Activated CD4-positive, alpha-beta T cell treated with anti-CD3 and anti-CD28 coated beads, Interleukin-2, amount 10 ng/mL, durations not matched to agents 24 days and 14 days (primary cell): ENCODE measurements at regions of chr11 and their contacts with region 1.

Region 1: DNA sequence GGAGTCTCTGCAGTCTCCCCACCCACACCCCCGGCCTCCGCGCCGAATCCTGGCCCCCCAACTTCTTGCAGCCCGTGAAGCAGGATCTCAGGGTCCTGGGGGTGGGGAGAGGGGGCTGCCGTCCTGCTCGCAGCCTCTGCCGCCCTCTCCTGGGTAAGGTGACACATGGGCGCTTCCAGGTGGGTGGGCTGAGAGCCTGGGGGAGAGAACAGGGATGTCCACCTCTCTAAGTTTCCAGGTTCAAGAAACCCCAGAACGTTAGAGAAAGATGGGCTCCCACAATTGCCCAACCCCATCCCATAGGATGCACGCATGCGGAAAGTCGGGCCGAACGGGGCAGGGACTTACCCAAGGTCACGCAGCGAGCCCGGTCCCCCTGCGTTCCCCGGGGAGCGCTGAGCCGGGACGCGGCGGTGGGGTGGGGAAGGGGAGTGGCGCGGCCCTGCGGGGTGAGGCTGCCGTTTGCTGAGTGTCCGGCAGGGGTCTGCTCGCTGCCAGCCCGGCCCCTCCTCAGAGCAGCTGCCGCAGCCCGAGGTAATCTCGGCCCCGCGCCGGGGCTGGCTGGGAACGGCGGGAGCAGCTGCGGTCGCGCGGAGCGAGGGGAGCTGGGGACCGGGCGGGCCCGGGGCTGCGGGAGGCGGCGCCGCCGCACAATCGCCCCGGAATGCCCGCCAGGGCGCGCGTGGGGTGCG is 705 bp upstream of the CAPN1 start:
- DNase-seq: peak; percentile 90
- H3K4me3 Mint-ChIP-seq: peak overlapping the region; percentile 84
- H3K27ac Mint-ChIP-seq: peak overlapping the region; percentile 72
- H3K4me1 Mint-ChIP-seq: peaks cover 10% of the 10 kb centered on the region
- H3K27me3 Mint-ChIP-seq: peaks cover 8% of the 10 kb centered on the region

Region 2: DNA sequence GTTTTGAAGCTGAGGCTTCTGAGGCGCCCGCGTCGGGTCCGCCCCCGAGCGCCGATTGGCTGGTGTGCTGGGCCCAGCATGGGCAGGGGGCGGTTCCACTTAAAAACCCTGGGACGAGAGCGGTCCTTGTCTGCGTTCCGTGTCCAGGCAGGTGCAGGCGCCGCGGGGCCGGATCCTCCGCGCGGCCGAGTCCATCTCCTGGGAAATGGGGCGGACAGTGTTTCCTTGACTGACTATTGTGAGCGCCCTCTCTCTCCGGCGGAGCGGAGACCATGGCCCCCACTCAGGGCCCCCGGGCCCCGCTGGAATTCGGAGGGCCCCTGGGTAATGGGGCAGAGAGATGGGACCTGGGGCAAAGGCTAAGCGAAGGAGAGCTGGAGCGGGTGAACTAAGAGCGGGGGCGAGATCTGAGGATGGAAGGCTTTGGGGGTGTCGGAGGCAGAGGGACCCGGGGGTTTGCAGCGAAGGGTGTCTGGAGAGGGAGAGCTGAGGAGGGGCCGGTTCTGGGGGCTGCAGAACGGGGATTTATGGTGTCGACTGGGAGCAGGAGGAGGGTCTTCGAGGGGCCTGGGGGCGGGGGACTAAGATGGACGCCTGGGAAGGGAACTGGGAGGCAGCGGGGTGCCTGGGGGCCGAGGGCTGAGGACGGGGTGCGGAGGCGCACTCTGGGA is 69.1 kb before region 1 on chr11 and contains the start of gene TM7SF2:
- intact Hi-C with region 1: loop called (anchors 2 kb)
- DNase-seq: peak; percentile 98
- H3K4me3 Mint-ChIP-seq: peak within 1 kb of the TSS; percentile 98
- H3K27ac Mint-ChIP-seq: peak within 1 kb of the TSS; percentile 93
- H3K4me1 Mint-ChIP-seq: peaks cover 25% of the 10 kb centered on the region
- H3K27me3 Mint-ChIP-seq: no peaks in the 10 kb centered on the region
- total RNA-seq, gene TM7SF2: 28.2 and 28.9 TPM in 2 replicates

Region 3: DNA sequence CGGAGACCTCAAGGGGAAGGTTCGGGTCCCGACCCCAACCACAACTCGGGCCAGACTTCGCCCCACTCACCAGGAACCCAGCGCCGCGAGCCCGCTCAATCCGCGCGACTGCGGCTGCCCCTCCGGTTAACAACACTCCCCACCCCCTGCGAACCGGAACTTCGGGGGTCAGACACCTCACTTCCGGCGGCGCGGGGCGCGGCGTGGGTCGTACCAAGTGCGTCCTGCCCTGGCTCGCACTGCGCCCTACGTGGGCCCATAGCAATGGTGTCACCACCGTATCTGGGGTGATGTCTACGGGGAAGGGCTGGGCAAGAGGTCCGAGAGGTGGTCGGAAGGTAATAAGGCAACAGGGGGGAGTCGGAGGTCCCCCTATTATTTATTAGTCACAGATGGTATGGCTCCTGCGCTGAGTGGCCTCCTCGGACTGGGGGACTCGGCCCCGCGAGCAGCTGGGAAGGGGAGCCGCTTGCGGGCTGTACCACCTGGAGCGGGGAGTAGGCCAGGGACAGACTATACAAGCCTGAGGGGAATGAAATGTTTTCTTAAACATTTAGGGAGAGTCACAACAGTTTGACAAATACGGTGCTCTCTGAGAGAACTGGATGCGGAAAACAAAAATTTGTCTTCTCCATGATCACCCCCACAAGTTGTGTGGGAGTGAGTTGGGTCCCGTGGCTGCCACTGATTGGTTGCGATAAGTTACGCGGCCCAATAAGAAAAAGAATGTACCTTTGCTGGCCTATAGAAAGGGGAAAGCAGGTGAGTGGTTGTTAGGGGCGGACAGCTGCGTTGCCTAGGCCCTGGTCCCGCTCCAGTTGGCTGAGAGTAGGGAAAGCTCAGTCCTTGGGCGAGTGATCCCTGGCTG is 46.4 kb before region 1 on chr11 and contains the start of gene SYVN1:
- intact Hi-C with region 1: loop called (anchors 1 kb)
- DNase-seq: peak; percentile 98
- H3K4me3 Mint-ChIP-seq: peak within 1 kb of the TSS; percentile 92
- H3K27ac Mint-ChIP-seq: peak within 1 kb of the TSS; percentile 97
- H3K4me1 Mint-ChIP-seq: peaks cover 31% of the 10 kb centered on the region
- H3K27me3 Mint-ChIP-seq: no peaks in the 10 kb centered on the region
- total RNA-seq, gene SYVN1: 36.9 and 39.0 TPM in 2 replicates